Panc1 (cell line): ENCODE measurements at regions of chr6 and their contacts with region 1.

Region 1: GRCh38 chr6:44931385-44931784 is 396.7 kb upstream of the RUNX2 start:
- DNase-seq: no peak
- ATAC-seq: no peak
- H3K4me3 ChIP-seq: no peak overlapping the region
- H3K27ac ChIP-seq: no peak overlapping the region
- H3K4me1 ChIP-seq: no peaks in the 10 kb centered on the region
- H3K27me3 ChIP-seq: no peaks in the 10 kb centered on the region
- CTCF ChIP-seq: no peak

Region 2: GRCh38 chr6:44704240-44705150 is 226.9 kb before region 1 on chr6:
- CTCF ChIA-PET with region 1: no interaction called
- POLR2A ChIA-PET with region 1: interaction called, 15 read pairs
- in situ Hi-C with region 1: no loop called
- intact Hi-C with region 1: no loop called
- DNase-seq: no peak
- ATAC-seq: no peak
- H3K4me3 ChIP-seq: no peak overlapping the region
- H3K27ac ChIP-seq: no peak overlapping the region
- H3K4me1 ChIP-seq: no peaks in the 10 kb centered on the region
- H3K27me3 ChIP-seq: no peaks in the 10 kb centered on the region
- CTCF ChIP-seq: no peak